Activated CD4-positive, alpha-beta T cell treated with anti-CD3 and anti-CD28 coated beads, Interleukin-2, amount 10 ng/mL, durations not matched to agents 24 days and 14 days (primary cell): ENCODE measurements at regions of chr1 and their contacts with region 1.

Region 1: GRCh38 chr1:160428655-160429054 is 28.3 kb downstream of the VANGL2 start:
- DNase-seq: peak; percentile 79
- H3K4me3 Mint-ChIP-seq: peak overlapping the region; percentile 39
- H3K27ac Mint-ChIP-seq: peak overlapping the region; percentile 85
- H3K4me1 Mint-ChIP-seq: peaks cover 52% of the 10 kb centered on the region
- H3K27me3 Mint-ChIP-seq: no peaks in the 10 kb centered on the region

Region 2: DNA sequence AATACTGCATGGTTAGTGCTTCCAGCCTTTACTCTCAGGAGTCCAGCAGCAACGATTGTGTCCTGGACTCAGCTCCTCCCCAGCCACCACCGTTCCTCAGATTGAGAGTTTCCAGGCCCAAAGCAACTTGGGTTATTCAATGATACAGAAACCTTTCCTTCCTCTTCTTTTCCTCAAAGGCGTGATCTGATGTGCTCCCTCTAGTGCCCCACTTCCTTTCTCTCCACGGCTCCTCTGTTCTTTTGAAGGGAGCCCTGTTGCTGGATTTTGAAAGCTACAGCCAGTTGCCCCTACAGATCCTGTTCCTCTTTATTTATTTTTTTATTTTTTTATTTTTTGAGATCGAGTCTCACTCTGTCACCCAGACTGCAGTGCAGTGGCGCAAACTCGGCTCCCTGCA is 728.3 kb before region 1 on chr1:
- intact Hi-C with region 1: no loop called
- DNase-seq: no peak
- H3K4me3 Mint-ChIP-seq: no peak overlapping the region
- H3K27ac Mint-ChIP-seq: no peak overlapping the region
- H3K4me1 Mint-ChIP-seq: no peaks in the 10 kb centered on the region
- H3K27me3 Mint-ChIP-seq: peaks cover 7% of the 10 kb centered on the region

Region 3: GRCh38 chr1:160451119-160451858 is 22.6 kb after region 1 on chr1:
- intact Hi-C with region 1: loop called (anchors 1 kb)
- DNase-seq: peak; percentile 60
- H3K4me3 Mint-ChIP-seq: peak overlapping the region; percentile 42
- H3K27ac Mint-ChIP-seq: peak overlapping the region; percentile 87
- H3K4me1 Mint-ChIP-seq: peaks cover 65% of the 10 kb centered on the region
- H3K27me3 Mint-ChIP-seq: no peaks in the 10 kb centered on the region

Region 4: GRCh38 chr1:160460683-160461287 is 32.1 kb after region 1 on chr1:
- intact Hi-C with region 1: loop called (anchors 1 kb)
- DNase-seq: peak; percentile 72
- H3K4me3 Mint-ChIP-seq: peak overlapping the region; percentile 77
- H3K27ac Mint-ChIP-seq: peak overlapping the region; percentile 98
- H3K4me1 Mint-ChIP-seq: peaks cover 74% of the 10 kb centered on the region
- H3K27me3 Mint-ChIP-seq: no peaks in the 10 kb centered on the region

Region 5: DNA sequence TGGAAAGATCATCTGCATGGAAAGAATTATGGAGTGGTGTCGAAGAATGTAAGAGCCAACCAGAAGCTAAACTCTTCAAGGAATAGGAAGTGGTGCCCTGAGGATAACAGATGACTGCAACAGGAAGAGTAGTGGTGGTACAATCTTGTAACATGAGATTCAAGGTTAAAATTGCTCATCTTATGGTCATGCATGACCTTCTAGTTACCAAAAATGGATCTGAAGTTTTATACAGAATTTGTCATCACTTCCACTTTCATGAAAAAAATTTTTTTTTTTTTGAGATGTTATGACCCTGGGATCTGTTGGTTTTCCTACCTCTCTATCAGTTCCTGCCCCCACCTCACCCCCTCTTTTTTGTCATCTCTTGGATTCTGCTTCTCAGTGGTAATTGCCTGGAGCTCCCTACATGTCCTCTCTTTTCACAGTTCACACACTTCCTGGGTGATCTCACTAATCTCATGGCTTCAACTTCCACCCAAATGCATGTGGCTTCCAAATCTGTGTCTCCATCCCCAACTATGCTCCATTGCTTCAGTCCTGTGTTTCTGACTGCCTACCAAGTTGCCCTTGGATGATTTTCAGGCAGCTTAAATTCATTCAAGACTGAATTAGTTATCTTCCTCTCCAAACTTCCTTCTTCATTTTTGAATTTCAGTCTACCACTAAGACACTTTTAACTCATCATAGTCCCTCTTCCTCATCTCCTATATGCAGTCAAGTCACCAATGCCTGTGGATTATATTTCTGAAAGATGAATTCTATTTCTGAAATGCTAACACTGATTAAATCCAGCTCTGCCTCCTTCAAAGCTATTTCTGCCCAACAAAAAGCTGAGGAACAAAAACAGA is 46.0 kb after region 1 on chr1:
- intact Hi-C with region 1: loop called (anchors 1 kb)
- DNase-seq: peak; percentile 56
- H3K4me3 Mint-ChIP-seq: no peak overlapping the region
- H3K27ac Mint-ChIP-seq: no peak overlapping the region
- H3K4me1 Mint-ChIP-seq: peaks cover 12% of the 10 kb centered on the region
- H3K27me3 Mint-ChIP-seq: no peaks in the 10 kb centered on the region

Region 6: DNA sequence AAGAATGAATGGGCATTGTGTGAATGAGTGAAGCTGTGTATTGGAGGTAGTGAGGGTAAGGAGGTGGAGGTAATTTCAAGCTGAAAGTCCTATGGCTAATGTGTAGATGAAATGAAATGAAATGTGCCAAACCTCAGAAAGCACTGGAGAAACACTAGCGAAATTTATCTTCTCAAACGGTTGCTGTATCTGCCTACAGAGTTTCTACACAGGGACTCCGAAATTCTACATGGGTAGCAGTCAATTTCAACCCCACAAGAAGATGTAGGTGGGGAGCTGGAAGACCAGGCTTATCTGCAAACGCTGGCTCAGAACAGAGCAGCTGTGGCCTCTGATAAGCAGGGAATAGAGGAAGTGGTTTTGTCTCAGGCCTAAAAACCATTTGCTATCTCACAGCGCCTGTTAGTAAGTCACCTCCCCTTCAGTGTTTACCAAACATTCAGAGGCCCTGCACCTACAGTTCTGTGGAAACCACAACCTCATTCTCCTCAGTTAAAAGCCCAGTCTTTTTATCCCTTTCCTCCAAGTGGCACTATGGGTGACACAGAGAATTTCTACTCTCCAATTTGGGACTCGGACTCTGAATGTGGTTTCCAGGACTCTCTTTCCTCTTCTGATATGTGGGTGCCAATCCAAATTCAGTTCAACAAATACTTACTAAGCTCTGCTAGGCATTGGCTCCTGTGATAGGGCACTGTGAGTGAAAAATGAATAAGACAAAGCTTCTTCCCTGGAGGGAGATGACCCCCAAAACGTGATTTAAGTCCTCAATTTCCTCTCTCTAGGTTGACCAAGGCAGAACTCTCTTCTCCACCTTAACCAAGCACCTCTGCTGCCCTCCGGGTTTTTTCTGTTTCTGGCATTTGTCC is 111.6 kb after region 1 on chr1:
- intact Hi-C with region 1: loop called (anchors 2 kb)
- DNase-seq: peak; percentile 90
- H3K4me3 Mint-ChIP-seq: peak overlapping the region; percentile 72
- H3K27ac Mint-ChIP-seq: peak overlapping the region; percentile 91
- H3K4me1 Mint-ChIP-seq: peaks cover 45% of the 10 kb centered on the region
- H3K27me3 Mint-ChIP-seq: no peaks in the 10 kb centered on the region